AG04450 (cell line): ENCODE measurements at regions of chr3 and their contacts with region 1.

Region 1: DNA sequence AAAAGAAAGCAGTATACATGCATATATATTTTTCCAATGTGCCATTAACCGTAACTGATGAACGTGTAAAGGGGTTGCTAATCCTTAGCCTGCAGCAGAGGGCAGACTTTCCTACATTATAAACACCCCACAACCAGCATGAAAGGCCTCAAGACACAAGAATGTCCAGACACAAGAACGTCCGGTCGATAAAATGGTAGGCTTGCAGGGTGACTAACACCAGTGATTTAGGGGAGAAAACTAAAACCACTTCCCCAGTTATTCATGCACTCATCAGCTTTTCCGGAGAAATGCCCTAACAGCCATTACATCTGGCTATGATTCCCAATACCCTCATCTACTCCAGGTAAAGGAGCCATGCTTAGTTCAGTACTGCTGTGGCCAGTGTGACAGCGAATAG is 57.4 kb downstream of the LRTM1 start:
- DNase-seq: peak; percentile 89
- H3K4me3 ChIP-seq: no peak overlapping the region
- H3K27ac ChIP-seq: peak overlapping the region; percentile 33
- H3K27me3 ChIP-seq: no peaks in the 10 kb centered on the region
- CTCF ChIP-seq: peak; percentile 80

Region 2: DNA sequence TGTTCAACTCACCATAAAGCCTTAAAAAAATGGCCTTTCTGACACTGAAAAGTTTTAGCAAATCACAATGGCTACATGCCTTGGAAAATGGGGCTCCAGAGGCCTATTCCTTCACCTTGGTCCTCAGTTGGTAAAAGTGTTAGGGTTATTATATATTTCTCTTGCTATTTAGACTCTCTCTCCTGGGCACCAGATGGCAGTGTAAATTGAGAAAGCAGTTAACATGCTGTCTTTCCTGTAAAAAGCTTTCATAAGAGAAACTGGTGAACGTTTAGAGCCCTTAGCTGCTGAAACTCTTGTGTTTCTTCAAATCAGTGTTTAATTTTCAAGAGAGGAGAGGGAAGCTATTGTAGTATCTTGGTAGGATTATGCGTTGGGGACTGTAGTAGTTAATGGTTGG is 32.5 kb before region 1 on chr3:
- CTCF ChIA-PET with region 1: interaction called, 10 read pairs
- POLR2A ChIA-PET with region 1: no interaction called
- DNase-seq: no peak
- H3K4me3 ChIP-seq: no peak overlapping the region
- H3K27ac ChIP-seq: no peak overlapping the region
- H3K27me3 ChIP-seq: peaks cover 3% of the 10 kb centered on the region
- CTCF ChIP-seq: peak; percentile 37

Region 3: GRCh38 chr3:54882129-54882833 is 11.9 kb after region 1 on chr3:
- CTCF ChIA-PET with region 1: no interaction called
- POLR2A ChIA-PET with region 1: no interaction called
- DNase-seq: peak; percentile 73
- H3K4me3 ChIP-seq: no peak overlapping the region
- H3K27ac ChIP-seq: peak overlapping the region; percentile 13
- H3K27me3 ChIP-seq: no peaks in the 10 kb centered on the region
- CTCF ChIP-seq: no peak